Activated naive CD4-positive, alpha-beta T cell treated with anti-CD3 and anti-CD28 coated beads for 36 hours (primary cell): ENCODE measurements at regions of chr9 and their contacts with region 1.

Region 1: DNA sequence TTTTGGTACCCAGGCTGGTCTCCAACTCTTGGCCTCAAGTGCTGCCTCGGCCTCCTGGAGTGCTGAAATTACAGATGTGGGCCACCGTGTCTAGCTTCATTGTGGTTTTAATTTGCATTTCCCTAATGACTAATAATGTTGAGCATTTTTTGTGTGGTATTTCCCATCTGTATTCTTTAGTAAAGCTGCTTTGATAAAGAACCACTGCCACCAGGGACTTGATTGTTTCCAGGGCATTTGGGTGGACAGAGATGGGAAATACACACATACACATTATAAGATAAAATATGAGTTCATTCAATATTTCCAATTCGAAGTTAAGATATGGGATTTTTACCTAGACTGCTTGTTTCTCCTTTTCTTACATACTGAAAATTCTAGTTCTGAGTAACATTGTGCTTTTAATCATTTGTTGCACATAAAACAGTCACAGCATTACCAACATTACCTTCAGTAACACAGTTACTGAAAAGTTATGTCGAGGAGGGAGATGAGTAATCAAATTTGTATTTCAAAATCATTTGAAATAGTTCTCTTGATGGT is 28.9 kb downstream of the HABP4 start:
- DNase-seq: peak; percentile 60
- H3K4me3 Mint-ChIP-seq: no peak overlapping the region
- H3K27ac Mint-ChIP-seq: peak overlapping the region; percentile 88
- H3K4me1 Mint-ChIP-seq: peaks cover 33% of the 10 kb centered on the region
- H3K27me3 Mint-ChIP-seq: no peaks in the 10 kb centered on the region

Region 2: GRCh38 chr9:96009690-96010472 is 469.0 kb before region 1 on chr9:
- CTCF ChIA-PET with region 1: no interaction called
- intact Hi-C with region 1: loop called (anchors 10 kb)
- DNase-seq: peak; percentile 83
- H3K4me3 Mint-ChIP-seq: no peak overlapping the region
- H3K27ac Mint-ChIP-seq: peak overlapping the region; percentile 73
- H3K4me1 Mint-ChIP-seq: peaks cover 54% of the 10 kb centered on the region
- H3K27me3 Mint-ChIP-seq: no peaks in the 10 kb centered on the region

Region 3: DNA sequence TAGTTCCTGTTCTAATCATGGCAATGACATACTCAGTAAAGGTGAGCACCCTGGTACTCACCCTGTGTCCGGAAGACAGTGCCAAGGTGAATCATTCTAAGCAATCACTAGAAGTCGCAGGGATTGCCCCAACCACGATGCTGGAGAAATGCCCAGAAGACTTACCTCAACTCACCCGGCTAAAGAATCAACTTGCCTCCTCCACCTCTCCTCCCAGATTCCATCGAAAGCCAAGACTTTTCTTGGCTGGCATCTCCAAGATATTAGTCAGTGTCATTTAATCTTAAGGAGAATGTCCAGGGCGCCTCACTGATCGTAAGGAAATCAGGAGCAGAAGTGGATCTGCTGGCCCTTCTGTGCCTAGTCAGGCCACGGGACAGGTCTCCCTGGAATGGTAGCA is 398.5 kb before region 1 on chr9:
- CTCF ChIA-PET with region 1: no interaction called
- intact Hi-C with region 1: no loop called
- DNase-seq: no peak
- H3K4me3 Mint-ChIP-seq: no peak overlapping the region
- H3K27ac Mint-ChIP-seq: no peak overlapping the region
- H3K4me1 Mint-ChIP-seq: no peaks in the 10 kb centered on the region
- H3K27me3 Mint-ChIP-seq: no peaks in the 10 kb centered on the region

Region 4: GRCh38 chr9:96241391-96241809 is 237.5 kb before region 1 on chr9:
- CTCF ChIA-PET with region 1: no interaction called
- intact Hi-C with region 1: loop called (anchors 1 kb)
- DNase-seq: peak; percentile 83
- H3K4me3 Mint-ChIP-seq: no peak overlapping the region
- H3K27ac Mint-ChIP-seq: no peak overlapping the region
- H3K4me1 Mint-ChIP-seq: peaks cover 13% of the 10 kb centered on the region
- H3K27me3 Mint-ChIP-seq: peaks cover 23% of the 10 kb centered on the region

Region 5: DNA sequence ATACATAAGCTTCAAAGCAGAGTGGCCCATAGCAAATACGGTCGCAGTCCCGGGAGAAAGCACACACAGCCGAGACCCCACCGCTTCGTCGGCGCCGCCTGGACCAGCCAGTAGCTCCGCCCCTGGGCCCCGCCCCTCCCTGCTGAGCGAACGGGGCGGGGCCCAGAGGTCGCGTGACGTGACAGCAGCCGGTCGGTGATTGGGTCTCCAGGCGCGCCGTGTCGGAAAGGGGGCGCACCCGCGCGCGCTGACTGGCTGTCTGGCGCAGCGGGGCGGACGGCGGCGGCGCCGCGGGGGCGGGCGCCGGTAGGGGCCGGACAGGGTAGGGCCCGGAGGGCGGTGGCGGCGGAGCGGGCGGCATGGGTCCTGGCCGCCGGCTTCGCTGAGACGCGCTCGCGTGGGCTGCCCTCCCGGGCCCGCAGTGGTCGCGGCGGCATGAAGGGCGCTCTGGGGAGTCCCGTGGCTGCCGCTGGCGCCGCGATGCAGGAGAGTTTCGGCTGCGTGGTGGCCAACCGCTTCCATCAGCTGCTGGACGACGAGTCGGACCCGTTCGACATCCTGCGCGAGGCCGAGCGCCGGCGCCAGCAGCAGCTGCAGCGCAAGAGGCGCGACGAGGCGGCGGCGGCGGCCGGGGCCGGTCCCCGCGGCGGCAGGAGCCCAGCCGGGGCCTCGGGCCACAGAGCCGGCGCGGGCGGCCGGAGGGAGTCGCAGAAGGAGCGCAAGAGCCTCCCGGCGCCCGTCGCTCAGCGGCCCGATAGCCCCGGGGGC is 28.9 kb before region 1 on chr9 and contains the start of gene HABP4:
- CTCF ChIA-PET with region 1: interaction called, 3 read pairs
- intact Hi-C with region 1: loop called (anchors 2 kb)
- DNase-seq: peak; percentile 95
- H3K4me3 Mint-ChIP-seq: peak within 1 kb of the TSS; percentile 85
- H3K27ac Mint-ChIP-seq: peak within 1 kb of the TSS; percentile 66
- H3K4me1 Mint-ChIP-seq: peaks cover 29% of the 10 kb centered on the region
- H3K27me3 Mint-ChIP-seq: peaks cover 4% of the 10 kb centered on the region
- total RNA-seq, gene HABP4: 7.3 to 7.9 TPM

Region 6: GRCh38 chr9:96464426-96464825 is 14.5 kb before region 1 on chr9:
- CTCF ChIA-PET with region 1: no interaction called
- intact Hi-C with region 1: no loop called
- DNase-seq: no peak
- H3K4me3 Mint-ChIP-seq: no peak overlapping the region
- H3K27ac Mint-ChIP-seq: no peak overlapping the region
- H3K4me1 Mint-ChIP-seq: peaks cover 3% of the 10 kb centered on the region
- H3K27me3 Mint-ChIP-seq: no peaks in the 10 kb centered on the region

Region 7: DNA sequence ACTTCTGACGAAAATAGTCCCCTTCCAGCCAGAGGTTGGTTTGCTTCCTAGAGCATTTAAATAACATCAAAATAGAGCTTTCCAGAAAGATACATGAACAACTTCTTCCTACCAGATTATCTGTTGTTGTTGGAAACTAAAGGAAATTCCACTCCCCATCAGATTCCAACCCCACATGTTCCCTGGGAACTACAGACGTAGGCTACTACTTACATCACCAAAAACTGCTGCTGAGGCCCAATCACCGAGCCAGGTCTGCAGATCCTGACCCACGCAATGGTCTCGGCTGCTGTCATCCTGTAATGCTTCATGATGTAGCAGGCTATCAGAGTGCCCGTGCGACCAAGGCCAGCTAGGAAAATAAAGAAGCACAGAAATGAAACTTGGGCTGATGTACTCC is 44.5 kb after region 1 on chr9:
- CTCF ChIA-PET with region 1: no interaction called
- intact Hi-C with region 1: no loop called
- DNase-seq: no peak
- H3K4me3 Mint-ChIP-seq: no peak overlapping the region
- H3K27ac Mint-ChIP-seq: no peak overlapping the region
- H3K4me1 Mint-ChIP-seq: peaks cover 20% of the 10 kb centered on the region
- H3K27me3 Mint-ChIP-seq: no peaks in the 10 kb centered on the region

Region 8: GRCh38 chr9:96553070-96553469 is 74.2 kb after region 1 on chr9:
- CTCF ChIA-PET with region 1: no interaction called
- intact Hi-C with region 1: loop called (anchors 1 kb)
- DNase-seq: no peak
- H3K4me3 Mint-ChIP-seq: no peak overlapping the region
- H3K27ac Mint-ChIP-seq: no peak overlapping the region
- H3K4me1 Mint-ChIP-seq: peaks cover 36% of the 10 kb centered on the region
- H3K27me3 Mint-ChIP-seq: no peaks in the 10 kb centered on the region

Region 9: DNA sequence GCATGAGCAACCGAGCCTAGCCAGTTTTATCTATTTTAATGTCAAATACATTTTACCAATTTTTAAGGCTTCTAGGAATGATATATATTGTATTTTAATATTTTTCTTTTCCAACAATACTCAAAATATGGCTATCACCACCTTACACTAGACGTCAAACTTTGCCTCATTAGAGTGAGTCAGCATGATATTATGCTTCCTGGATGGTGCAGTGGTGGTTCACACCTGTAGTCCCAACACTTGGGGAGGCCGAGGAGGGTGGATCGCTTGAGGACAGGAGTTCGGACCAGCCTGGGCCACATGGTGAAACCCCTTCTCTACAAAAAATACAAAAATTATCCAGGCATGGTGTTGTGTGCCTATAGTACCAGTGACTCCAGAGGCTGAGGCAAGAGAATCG is 148.0 kb after region 1 on chr9:
- CTCF ChIA-PET with region 1: no interaction called
- intact Hi-C with region 1: no loop called
- DNase-seq: no peak
- H3K4me3 Mint-ChIP-seq: no peak overlapping the region
- H3K27ac Mint-ChIP-seq: no peak overlapping the region
- H3K4me1 Mint-ChIP-seq: peaks cover 9% of the 10 kb centered on the region
- H3K27me3 Mint-ChIP-seq: peaks cover 19% of the 10 kb centered on the region

Region 10: GRCh38 chr9:97062417-97062985 is 583.6 kb after region 1 on chr9:
- CTCF ChIA-PET with region 1: no interaction called
- intact Hi-C with region 1: loop called (anchors 5 kb)
- DNase-seq: peak; percentile 82
- H3K4me3 Mint-ChIP-seq: no peak overlapping the region
- H3K27ac Mint-ChIP-seq: peak overlapping the region; percentile 85
- H3K4me1 Mint-ChIP-seq: peaks cover 15% of the 10 kb centered on the region
- H3K27me3 Mint-ChIP-seq: peaks cover 7% of the 10 kb centered on the region